Activated CD8-positive, alpha-beta T cell treated with anti-CD3 and anti-CD28 coated beads, Interleukin-2, amount 10 ng/mL, durations not matched to agents 7 days and 5 days (primary cell): ENCODE measurements at regions of chr2 and their contacts with region 1.

Region 1: DNA sequence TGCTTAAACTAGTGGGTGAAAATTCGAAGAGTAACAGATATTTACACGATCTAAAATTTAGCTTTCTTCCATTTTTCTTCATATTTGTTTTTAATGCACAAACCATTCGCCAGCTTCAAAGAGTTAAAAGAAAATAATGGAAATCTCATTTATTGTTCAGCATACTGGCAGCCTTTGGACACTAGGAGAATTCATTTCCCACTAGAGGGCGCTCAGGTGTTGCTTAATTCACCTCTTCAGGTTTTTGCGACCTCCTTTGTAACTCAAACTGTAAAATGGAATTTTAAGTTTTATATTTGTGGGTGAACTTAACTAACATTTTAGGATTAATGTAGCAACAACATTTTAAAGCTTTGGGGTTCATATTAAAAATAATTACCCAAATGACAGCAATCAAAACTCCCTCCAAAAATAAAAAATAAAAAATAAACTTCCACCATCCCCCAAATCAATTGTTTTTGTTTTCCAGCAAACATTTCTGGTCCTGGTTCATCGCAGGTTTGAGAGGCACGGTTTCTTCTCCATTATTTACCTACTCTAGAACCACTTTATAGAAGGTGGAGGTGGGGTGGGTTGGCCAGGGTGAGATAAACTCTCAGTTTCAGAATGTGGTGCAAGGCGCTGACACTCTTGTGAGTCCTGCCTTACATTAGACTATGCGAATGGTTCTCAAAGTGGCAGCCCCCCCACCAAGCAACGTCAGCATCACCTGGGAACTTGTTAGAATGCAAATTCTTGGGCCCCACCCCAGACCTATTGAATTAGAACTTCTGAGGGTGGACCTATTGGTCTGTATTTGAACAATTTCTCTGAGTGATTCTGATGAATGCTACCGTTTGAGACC is 24.7 kb upstream of the PNPT1 start:
- DNase-seq: peak; percentile 71
- ATAC-seq: peak; percentile 69
- H3K4me3 Mint-ChIP-seq: no peak overlapping the region
- H3K27ac Mint-ChIP-seq: no peak overlapping the region
- H3K4me1 Mint-ChIP-seq: no peaks in the 10 kb centered on the region
- H3K27me3 Mint-ChIP-seq: peaks cover 6% of the 10 kb centered on the region

Region 2: GRCh38 chr2:55649211-55649610 is 69.2 kb before region 1 on chr2:
- CTCF ChIA-PET with region 1: no interaction called
- POLR2A ChIA-PET with region 1: no interaction called
- DNase-seq: no peak
- ATAC-seq: no peak
- H3K4me3 Mint-ChIP-seq: no peak overlapping the region
- H3K27ac Mint-ChIP-seq: no peak overlapping the region
- H3K4me1 Mint-ChIP-seq: no peaks in the 10 kb centered on the region
- H3K27me3 Mint-ChIP-seq: no peaks in the 10 kb centered on the region

Region 3: GRCh38 chr2:55779459-55780421 is 61.4 kb after region 1 on chr2:
- CTCF ChIA-PET with region 1: no interaction called
- POLR2A ChIA-PET with region 1: no interaction called
- DNase-seq: no peak
- ATAC-seq: no peak
- H3K4me3 Mint-ChIP-seq: no peak overlapping the region
- H3K27ac Mint-ChIP-seq: no peak overlapping the region
- H3K4me1 Mint-ChIP-seq: no peaks in the 10 kb centered on the region
- H3K27me3 Mint-ChIP-seq: peaks cover 4% of the 10 kb centered on the region

Region 4: DNA sequence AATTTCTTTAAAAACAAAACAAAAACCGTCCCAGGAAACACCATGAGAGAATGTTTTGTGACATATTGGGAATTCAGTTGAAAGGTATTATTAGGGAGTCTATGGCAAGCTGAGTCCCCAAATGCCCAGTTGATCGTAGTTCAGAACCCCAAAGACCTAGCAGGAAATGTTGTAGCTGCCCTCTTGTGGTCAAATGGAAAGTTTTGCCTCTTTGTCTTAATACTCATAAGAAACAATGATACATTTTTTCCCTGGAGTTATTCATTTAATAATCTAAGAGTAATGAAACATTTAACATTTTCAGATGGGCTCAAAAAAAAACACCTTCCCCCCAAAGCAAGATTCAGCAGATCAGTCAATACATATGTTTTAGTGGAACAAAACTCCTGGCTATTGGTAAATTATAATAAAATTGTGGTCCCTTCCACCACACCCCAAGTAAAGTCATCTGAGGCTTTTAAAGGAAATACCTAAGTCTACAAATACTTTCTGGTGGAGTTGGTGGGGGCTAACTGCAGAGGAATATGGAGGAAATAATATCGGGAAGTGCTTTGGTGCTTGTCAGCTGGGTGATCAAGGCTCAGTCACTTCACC is 243.0 kb after region 1 on chr2:
- CTCF ChIA-PET with region 1: interaction called, 17 read pairs
- POLR2A ChIA-PET with region 1: no interaction called
- DNase-seq: no peak
- ATAC-seq: no peak
- H3K4me3 Mint-ChIP-seq: no peak overlapping the region
- H3K27ac Mint-ChIP-seq: no peak overlapping the region
- H3K4me1 Mint-ChIP-seq: no peaks in the 10 kb centered on the region
- H3K27me3 Mint-ChIP-seq: peaks cover 2% of the 10 kb centered on the region